ENCODE measurements at regions of chr1 and their contacts with region 1.

Region 1: DNA sequence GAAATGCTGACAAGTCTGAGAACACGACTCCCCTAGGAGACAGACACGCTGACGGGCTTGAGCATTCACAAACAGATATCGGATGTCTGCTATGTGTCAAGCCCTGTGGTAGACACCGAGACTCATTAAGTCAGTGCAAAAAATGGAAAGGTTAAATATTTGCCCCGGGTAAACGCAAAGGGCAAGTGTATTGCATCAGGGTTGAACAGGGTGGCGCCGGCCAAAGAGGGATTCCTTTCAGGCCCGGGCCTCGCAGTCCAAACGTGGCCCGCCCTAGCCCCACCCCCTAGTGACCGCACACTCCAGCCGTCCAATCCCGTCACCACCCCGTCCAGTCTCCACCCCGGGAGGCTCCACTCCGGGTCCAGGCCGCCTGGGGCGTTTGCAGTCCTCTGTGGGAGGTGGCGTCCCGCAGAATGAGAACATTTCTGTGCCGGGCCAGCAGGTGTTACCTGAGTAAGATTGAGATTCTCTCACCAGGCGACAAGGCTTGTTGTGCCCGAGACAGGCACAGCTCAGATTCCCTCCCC is 16.3 kb upstream of the TMEM9 start:
- DNase-seq: peak; percentile 99
- H3K27ac ChIP-seq: peak overlapping the region; percentile 75
- CTCF ChIP-seq: no peak

Region 2: GRCh38 chr1:201184307-201185122 is 13.9 kb after region 1 on chr1:
- CTCF ChIA-PET with region 1: interaction called, 21 read pairs
- POLR2A ChIA-PET with region 1: no interaction called
- DNase-seq: peak; percentile 80
- H3K27ac ChIP-seq: no peak overlapping the region
- CTCF ChIP-seq: 0 out of 2 replicates have a peak, but pooled peaks have one; percentile 34